ENCODE measurements at regions of chr19 and their contacts with region 1.

Region 1: GRCh38 chr19:20923077-20923871 is at the start of gene ZNF85:
- DNase-seq: peak; percentile 91 to 94 (median 93)
- ATAC-seq: peak; percentile 99 to 100 (median 100)
- H3K4me3 ChIP-seq: peak within 1 kb of the TSS; percentile 52 to 85 (median 72)
- H3K27ac ChIP-seq: peak within 1 kb of the TSS; percentile 60 to 87 (median 83)
- H3K4me1 ChIP-seq: peaks cover 0 to 14% (median 4%) of the 10 kb centered on the region in 12 donors
- H3K27me3 ChIP-seq: no peaks in the 10 kb centered on the region
- CTCF ChIP-seq: no peak
- POLR2A ChIP-seq: peak in 1 of 2 donors; percentile 52
- total RNA-seq, gene ZNF85: 1.6 to 5.7 (median 2.7) TPM

Region 2: GRCh38 chr19:20565321-20566018 is 357.8 kb before region 1 on chr19 and contains the start of gene ZNF737:
- intact Hi-C with region 1: loop called in 2 of 10 experiments (anchors 2 to 10 kb)
- DNase-seq: peak; percentile 96 to 98 (median 97)
- ATAC-seq: peak; percentile 95 to 99 (median 98)
- H3K4me3 ChIP-seq: peak within 1 kb of the TSS; percentile 46 to 87 (median 70)
- H3K27ac ChIP-seq: peak within 1 kb of the TSS; percentile 51 to 94 (median 89)
- H3K4me1 ChIP-seq: peaks cover 0 to 17% (median 7%) of the 10 kb centered on the region in 12 donors
- H3K27me3 ChIP-seq: no peaks in the 10 kb centered on the region
- CTCF ChIP-seq: peak in 10 of 12 donors; percentile 17 to 57 (median 38)
- POLR2A ChIP-seq: peak in 1 of 2 donors; percentile 77
- total RNA-seq, gene ZNF737: 2.7 to 8.8 (median 5.3) TPM

Region 3: GRCh38 chr19:20661150-20661819 is 262.0 kb before region 1 on chr19 and contains the start of gene ZNF626:
- intact Hi-C with region 1: loop called in 2 of 10 experiments (anchors 5 to 10 kb)
- DNase-seq: peak; percentile 95 to 99 (median 98)
- ATAC-seq: peak; percentile 99 to 100 (median 99)
- H3K4me3 ChIP-seq: peak within 1 kb of the TSS; percentile 66 to 93 (median 80)
- H3K27ac ChIP-seq: peak within 1 kb of the TSS; percentile 51 to 89 (median 86)
- H3K4me1 ChIP-seq: peaks cover 0 to 50% (median 26%) of the 10 kb centered on the region in 12 donors
- H3K27me3 ChIP-seq: no peaks in the 10 kb centered on the region
- CTCF ChIP-seq: no peak
- POLR2A ChIP-seq: peak in 1 of 2 donors; percentile 87
- total RNA-seq, gene ZNF626: 6.9 to 14.8 (median 9.6) TPM

Region 4: GRCh38 chr19:20776083-20777076 is 146.9 kb before region 1 on chr19 and contains the start of gene ZNF66:
- intact Hi-C with region 1: loop called in 2 of 10 experiments (anchors 10 kb)
- DNase-seq: peak; percentile 96 to 99 (median 97)
- ATAC-seq: peak; percentile 100
- H3K4me3 ChIP-seq: peak within 1 kb of the TSS; percentile 58 to 96 (median 76)
- H3K27ac ChIP-seq: peak within 1 kb of the TSS in 9 of 12 donors; percentile 11 to 62 (median 43)
- H3K4me1 ChIP-seq: peaks cover 0 to 14% (median 3%) of the 10 kb centered on the region in 12 donors
- H3K27me3 ChIP-seq: no peaks in the 10 kb centered on the region
- CTCF ChIP-seq: no peak
- POLR2A ChIP-seq: peak in 1 of 2 donors; percentile 82
- total RNA-seq, gene ZNF66: 0.35 to 3.7 (median 1.5) TPM

Region 5: DNA sequence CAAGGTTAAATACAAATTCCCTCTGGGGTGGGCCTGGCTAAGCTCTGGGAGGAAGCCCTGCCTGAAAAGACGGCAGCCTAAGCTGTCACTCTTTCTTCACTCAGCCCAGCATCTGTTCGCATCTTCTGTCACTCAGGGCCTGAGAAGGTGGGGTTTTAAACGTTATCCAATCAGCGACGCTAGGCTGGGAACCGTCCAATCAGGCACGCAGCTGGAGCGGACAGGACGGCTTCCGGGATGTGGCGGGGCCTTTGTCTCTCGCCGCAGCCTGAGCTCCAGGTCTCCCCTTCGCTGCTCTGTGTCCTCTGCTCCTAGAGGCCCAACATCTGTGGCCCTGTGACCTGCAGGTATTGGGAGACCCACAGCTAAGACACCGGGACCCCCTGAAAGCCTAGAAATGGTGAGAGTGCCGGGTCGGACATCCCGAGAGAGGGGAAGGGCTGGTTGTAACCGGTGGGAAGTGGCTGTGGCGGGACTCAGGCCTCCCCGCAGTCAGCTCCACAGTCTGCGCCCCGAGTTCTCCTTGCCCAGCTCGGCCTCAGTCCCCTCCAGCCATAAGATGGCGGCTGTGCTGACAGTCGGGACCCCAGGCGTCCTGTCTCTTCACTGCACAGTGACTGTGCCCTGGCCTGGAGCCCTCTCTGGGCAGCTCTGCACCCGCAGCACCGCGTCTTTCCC is 218.7 kb after region 1 on chr19 and contains the start of gene ZNF431:
- intact Hi-C with region 1: loop called in 1 of 10 experiments (anchors 10 kb)
- DNase-seq: peak; percentile 93 to 96 (median 94)
- ATAC-seq: peak; percentile 99 to 100 (median 100)
- H3K4me3 ChIP-seq: peak within 1 kb of the TSS; percentile 70 to 92 (median 81)
- H3K27ac ChIP-seq: peak within 1 kb of the TSS; percentile 3 to 91 (median 73)
- H3K4me1 ChIP-seq: peaks cover 0 to 19% (median 8%) of the 10 kb centered on the region in 12 donors
- H3K27me3 ChIP-seq: no peaks in the 10 kb centered on the region
- CTCF ChIP-seq: no peak
- POLR2A ChIP-seq: peak in 1 of 2 donors; percentile 75
- total RNA-seq, gene ZNF431: 4.6 to 20.0 (median 11.0) TPM

Measured in heart left ventricle (tissue), 16 donors.